ENCODE measurements at regions of chr14 and their contacts with region 1.

Region 1: DNA sequence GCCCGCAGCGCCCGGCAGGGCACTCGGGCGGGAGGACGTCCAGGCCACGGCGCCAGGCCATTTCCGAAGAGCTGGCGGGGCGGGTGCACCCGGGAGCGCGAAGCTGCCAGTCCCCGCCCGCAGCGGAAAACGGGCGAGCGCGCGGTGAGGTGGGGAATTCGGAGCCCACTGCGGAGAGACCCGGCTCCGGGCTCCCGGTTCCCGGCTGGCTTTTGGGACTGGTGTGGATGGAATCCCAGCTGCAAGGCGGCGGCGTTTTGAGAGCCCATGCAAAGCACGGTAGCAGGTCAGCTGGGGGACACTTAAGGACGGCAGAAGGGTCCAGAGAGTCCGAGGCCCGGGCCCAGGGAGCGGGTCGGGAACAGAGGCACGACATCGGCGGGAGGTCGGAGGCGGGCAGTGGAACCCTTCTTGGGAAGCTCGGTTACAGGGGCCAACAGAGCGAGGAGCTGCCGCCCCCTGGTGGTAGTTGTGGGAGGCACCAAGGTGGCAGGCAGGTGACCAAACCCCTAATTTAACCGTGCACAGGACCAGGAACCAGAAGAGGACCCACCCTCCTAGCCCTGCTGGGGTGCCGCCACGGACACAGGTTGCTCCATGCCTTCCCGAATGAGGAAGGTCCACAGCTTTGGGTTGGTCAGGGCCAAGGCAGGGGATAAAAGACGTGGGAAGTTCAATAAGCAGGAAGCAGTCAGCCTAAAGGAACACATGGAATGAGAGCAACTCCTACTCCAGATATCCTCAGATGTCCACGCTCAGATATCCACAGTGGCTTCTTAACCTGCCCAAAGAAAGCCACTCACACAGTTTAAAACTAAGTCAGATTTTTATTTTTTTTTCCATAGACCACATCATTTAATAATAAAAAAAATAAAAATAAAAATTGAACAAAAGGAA is 685 bp upstream of the CDH24 start:
- DNase-seq: peak; percentile 96
- H3K4me3 Mint-ChIP-seq: peak overlapping the region; percentile 85
- H3K27ac Mint-ChIP-seq: peak overlapping the region; percentile 57
- H3K4me1 Mint-ChIP-seq: peaks cover 17% of the 10 kb centered on the region
- H3K27me3 Mint-ChIP-seq: peaks cover 8% of the 10 kb centered on the region

Region 2: DNA sequence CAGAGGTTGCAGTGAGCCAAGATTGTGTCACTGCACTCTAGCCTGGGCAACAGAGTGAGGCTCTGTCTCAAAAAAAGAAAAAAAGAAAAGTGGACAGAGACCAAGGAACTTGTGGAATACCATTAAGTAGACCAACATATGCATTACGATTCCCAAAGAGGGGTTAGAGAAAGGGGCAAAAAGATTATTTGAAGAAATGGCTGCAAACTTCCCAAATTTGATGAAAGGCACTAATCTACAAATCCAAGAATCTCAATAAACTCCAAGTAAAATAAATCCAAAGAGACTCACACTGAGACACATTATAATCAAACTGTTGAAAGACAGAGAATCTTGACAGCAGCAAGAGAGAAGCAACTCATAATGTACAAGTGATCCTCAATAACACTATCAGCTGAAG is 296.3 kb before region 1 on chr14:
- intact Hi-C with region 1: no loop called
- DNase-seq: no peak
- H3K4me3 Mint-ChIP-seq: no peak overlapping the region
- H3K27ac Mint-ChIP-seq: peak overlapping the region; percentile 24
- H3K4me1 Mint-ChIP-seq: peaks cover 9% of the 10 kb centered on the region
- H3K27me3 Mint-ChIP-seq: no peaks in the 10 kb centered on the region

Region 3: DNA sequence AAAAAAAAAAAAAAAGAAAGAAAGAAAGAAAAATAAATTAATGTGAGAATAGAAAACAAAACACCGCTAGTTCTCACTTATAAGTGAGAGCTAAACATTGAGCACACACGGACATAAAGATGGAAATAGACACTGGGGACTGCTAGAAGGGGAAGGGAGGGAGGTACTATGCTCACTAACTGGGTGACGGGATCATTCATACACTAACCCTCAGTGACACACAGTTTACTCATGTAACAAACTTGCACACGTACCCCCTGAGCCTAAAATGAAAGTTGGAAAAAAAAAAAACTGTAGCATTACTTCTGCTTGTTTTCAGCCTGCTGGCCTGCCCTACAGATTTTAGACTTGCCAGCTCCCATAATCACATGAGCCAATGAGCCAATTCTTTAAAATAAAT is 118.3 kb before region 1 on chr14:
- intact Hi-C with region 1: no loop called
- DNase-seq: no peak
- H3K4me3 Mint-ChIP-seq: no peak overlapping the region
- H3K27ac Mint-ChIP-seq: no peak overlapping the region
- H3K4me1 Mint-ChIP-seq: no peaks in the 10 kb centered on the region
- H3K27me3 Mint-ChIP-seq: no peaks in the 10 kb centered on the region

Region 4: DNA sequence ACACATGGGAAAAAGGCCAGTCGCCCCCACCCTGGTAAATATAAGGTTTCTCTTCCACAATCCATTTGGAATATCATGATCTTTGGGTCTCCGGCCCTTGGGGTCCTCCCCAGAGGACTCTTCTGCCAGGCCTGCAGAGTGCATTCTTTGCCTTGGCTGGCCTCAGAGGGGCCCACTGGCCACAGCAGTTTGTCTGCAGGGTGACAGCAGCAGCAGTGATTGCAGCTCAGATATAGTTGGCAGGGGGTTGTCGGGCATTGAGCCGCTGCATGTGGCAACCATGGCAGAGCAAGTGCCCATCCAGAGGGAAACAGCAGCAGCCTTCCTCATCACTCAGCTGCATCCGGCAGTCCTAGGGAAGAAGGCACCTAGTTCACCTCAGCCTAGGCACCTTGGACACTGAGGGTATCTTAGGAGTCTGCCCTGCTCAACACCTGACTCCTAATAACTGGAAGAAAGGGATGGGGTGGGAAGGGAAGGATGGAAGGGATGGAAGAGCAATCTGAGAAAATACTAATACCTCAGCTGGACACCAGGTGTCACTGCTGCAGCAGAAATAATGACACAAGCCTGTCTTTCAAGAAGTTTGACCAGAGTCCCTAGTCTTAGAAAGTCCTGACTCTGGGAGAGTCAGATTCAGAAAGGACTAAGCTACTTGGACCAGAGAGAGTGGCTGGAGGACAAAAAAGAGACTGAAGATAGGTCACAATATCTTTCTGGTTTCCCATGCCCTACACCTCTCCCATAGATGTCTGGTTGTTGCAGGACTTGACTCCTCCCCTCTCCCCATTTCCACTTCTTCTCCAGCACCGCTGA is 84.6 kb before region 1 on chr14:
- intact Hi-C with region 1: loop called (anchors 1 kb)
- DNase-seq: peak; percentile 84
- H3K4me3 Mint-ChIP-seq: no peak overlapping the region
- H3K27ac Mint-ChIP-seq: no peak overlapping the region
- H3K4me1 Mint-ChIP-seq: no peaks in the 10 kb centered on the region
- H3K27me3 Mint-ChIP-seq: peaks cover 11% of the 10 kb centered on the region

Region 5: GRCh38 chr14:22994762-22995275 is 63.2 kb before region 1 on chr14:
- intact Hi-C with region 1: loop called (anchors 2 kb)
- DNase-seq: peak; percentile 72
- H3K4me3 Mint-ChIP-seq: no peak overlapping the region
- H3K27ac Mint-ChIP-seq: no peak overlapping the region
- H3K4me1 Mint-ChIP-seq: peaks cover 2% of the 10 kb centered on the region
- H3K27me3 Mint-ChIP-seq: no peaks in the 10 kb centered on the region

Region 6: DNA sequence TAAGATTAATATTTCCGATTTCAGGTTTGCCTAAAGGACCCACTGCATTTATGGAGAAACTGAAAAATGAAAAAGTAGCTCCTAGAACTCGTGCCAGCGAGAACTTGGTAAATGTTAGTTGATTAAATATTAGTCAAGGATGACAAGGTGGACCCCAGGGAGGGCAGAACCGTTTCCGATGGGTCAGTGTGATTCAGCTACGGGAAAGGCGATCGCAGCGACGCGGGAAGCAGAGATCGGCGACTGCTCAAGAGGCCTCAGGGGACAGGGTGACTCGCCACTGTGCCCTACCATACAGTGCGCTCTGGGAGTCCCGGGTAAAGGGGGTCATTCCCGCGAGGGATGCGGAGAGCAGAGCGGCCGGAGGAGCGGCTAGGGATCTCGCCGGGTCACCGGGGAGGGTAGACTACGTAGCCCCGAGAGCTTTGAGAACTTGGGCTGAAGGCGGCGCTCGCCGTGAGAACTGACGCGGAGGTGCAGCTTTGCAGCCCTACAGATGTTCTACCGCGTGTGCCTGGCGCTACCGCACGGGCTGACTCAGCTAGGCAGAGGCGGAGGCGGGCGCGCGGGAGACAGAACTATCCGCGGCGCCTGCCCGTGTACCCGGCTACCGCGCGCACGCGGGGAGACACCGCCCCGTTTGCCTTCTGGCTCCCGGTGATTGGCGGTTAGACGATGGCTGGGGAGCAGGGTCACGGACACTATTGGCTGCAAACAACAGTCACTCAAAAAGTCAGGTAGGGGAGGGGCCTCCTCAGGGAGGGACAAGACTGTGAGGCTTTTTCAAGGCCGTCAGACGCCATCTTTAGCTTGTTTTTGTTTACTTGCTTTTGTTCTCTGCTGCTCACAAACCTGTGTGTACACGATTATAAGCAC is 51.2 kb before region 1 on chr14:
- intact Hi-C with region 1: loop called (anchors 5 kb)
- DNase-seq: peak; percentile 99
- H3K4me3 Mint-ChIP-seq: peak overlapping the region; percentile 92
- H3K27ac Mint-ChIP-seq: peak overlapping the region; percentile 95
- H3K4me1 Mint-ChIP-seq: peaks cover 36% of the 10 kb centered on the region
- H3K27me3 Mint-ChIP-seq: no peaks in the 10 kb centered on the region

Region 7: DNA sequence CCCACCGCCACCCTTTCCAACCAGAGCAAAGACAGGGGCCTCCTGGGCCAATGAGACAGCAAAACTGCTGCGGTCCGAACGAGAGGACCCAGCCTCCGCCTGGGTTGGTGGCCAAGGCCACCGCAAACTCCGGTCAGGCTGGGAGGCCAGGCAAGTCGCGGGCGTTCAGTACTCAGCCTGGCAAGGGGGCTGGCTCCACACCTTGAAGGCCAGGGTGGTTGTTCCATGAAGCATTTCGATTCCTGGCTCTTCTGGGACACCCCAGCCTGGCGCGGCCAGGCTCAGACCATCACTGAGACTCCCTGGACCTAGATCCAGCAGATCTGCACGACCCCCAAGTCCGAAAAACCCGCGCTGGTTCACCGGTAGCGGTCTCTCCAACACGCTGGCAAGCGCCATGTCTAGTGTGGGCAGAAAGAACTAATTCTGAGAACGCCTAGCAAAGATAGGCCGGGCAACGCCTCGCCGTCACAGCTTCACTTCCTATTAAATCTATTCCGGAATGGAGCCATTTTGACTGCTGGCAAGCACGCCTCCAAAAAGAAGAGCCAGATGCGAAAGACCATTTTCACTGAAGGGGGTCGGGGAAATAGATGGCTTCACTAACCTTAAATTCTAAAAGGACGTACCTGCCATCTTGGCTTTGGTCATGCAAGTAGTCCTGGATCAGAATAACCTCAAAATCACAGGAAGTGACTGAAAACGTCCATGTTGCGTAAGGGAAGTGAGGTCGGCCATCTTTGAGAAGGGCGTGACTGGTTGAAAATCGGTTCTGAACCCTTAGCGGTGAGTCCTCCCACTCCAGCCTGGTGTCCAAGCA is 23.3 kb before region 1 on chr14 and contains the start of gene PSMB5:
- intact Hi-C with region 1: loop called (anchors 2 kb)
- DNase-seq: peak; percentile 96
- H3K4me3 Mint-ChIP-seq: peak within 1 kb of the TSS; percentile 81
- H3K27ac Mint-ChIP-seq: peak within 1 kb of the TSS; percentile 88
- H3K4me1 Mint-ChIP-seq: peaks cover 24% of the 10 kb centered on the region
- H3K27me3 Mint-ChIP-seq: no peaks in the 10 kb centered on the region
- total RNA-seq, gene PSMB5: 150 TPM in 2 replicates